ENCODE measurements at regions of chr7 and their contacts with region 1.

Region 1: DNA sequence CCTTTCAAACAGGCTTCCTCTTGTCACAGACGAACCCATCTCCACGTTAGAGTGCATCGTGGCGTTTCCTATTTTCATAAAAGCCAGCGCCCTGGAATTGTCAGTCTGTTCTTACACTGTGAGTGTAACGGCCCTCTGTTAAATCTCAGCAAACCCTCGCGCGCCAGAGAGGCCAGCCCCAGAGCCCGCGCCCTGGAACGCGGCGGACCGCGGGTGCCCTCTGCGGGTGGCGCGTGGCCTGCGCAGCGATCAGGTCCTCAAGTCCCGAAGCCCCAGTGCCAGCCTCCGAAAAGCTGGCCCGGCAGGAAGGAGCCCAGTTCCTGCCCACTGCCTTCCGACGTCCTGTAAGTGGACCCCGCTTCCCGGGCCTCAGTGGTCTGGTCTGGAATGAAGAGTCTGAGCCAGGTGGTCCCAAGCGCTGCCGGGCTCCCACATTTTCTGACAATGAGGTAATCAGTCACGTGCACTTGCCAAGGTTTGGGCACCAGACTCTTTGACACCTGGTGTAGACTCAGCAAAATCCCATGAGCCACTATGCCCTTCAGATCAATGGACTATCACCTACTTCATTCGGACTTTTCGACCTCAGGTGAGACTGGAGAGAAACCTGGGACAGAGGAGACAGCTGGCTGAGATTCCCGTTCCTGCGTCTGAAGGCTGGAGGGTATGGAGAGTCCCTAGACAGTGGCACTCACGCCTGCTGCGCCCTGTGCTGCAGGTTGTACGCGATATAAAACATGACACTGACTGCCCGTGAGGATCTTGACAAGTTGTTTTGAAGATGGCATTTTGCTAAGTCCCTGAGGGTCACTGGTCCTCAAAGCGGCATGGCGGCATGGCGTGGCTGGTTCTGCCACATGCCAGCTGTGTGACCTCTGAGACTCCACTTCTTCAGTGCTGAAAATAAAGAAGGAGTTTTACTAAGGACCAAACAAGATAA is 109.4 kb upstream of the LANCL2 start:
- DNase-seq: peak; percentile 87
- H3K4me3 ChIP-seq: peak overlapping the region; percentile 37 to 66 (median 54)
- H3K27ac ChIP-seq: peak overlapping the region; percentile 33 to 64 (median 40)
- H3K4me1 ChIP-seq: peaks cover 7 to 16% (median 15%) of the 10 kb centered on the region in 4 donors
- H3K27me3 ChIP-seq: peaks cover 35% of the 10 kb centered on the region
- CTCF ChIP-seq: peak; percentile 86 to 88 (median 87)
- EP300 ChIP-seq: no peak
- POLR2A ChIP-seq: no peak

Region 2: GRCh38 chr7:54773472-54774399 is 482.0 kb before region 1 on chr7:
- in situ Hi-C with region 1: loop called in 2 of 4 experiments (anchors 5 kb)
- intact Hi-C with region 1: loop called (anchors 5 kb)
- DNase-seq: peak; percentile 89
- H3K4me3 ChIP-seq: peak overlapping the region; percentile 23 to 52 (median 32)
- H3K27ac ChIP-seq: peak overlapping the region in 2 of 4 donors; percentile 57 to 65
- H3K4me1 ChIP-seq: peaks cover 0 to 6% (median 0%) of the 10 kb centered on the region in 4 donors
- H3K27me3 ChIP-seq: peaks cover 35% of the 10 kb centered on the region
- CTCF ChIP-seq: peak; percentile 76 to 90 (median 82)
- EP300 ChIP-seq: no peak
- POLR2A ChIP-seq: no peak

Region 3: GRCh38 chr7:55192718-55193117 is 63.0 kb before region 1 on chr7:
- in situ Hi-C with region 1: no loop called
- intact Hi-C with region 1: no loop called
- DNase-seq: no peak
- H3K4me3 ChIP-seq: no peak overlapping the region
- H3K27ac ChIP-seq: peak overlapping the region in 1 of 4 donors; percentile 6
- H3K4me1 ChIP-seq: peaks cover 3 to 11% (median 9%) of the 10 kb centered on the region in 4 donors
- H3K27me3 ChIP-seq: no peaks in the 10 kb centered on the region
- CTCF ChIP-seq: no peak
- EP300 ChIP-seq: no peak
- POLR2A ChIP-seq: no peak

Region 4: DNA sequence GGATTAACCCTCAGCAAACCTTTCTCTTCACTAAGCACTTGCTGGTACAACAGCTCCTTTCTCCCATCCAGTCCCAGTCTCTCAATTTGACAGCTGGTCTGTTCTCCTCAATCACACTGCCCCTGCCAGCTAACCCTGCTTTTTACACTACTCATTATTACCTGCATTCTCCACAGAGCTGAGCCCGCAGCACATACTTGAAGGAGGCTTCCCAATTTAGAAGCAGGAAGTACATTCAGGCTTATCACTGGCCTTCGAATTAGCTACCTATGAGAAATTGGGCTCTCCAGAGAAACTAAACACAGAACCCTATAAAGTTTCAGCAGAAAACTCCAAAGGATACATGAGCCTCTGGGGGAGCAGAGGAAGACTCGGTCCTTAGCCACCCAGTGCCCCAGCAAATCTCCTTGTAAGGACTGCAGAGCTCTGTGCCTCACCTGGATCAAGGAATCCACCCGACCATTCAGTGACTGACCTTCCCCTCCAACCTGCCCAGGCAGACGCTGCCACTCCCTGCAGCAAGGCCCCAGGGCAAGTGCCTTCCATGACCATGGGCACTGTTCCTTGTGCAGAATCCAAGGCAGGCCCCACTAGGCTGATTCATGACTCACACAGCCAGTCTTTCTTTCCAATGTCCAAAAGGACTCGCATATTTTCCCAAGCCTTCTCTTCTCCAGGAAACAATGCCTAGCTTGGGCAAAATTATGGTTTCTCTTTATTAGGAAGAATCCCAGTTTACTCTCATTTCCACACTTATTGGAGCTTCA is 248.5 kb after region 1 on chr7:
- in situ Hi-C with region 1: no loop called
- intact Hi-C with region 1: no loop called
- DNase-seq: no peak
- H3K4me3 ChIP-seq: no peak overlapping the region
- H3K27ac ChIP-seq: no peak overlapping the region
- H3K4me1 ChIP-seq: peaks cover 0 to 2% (median 0%) of the 10 kb centered on the region in 4 donors
- H3K27me3 ChIP-seq: no peaks in the 10 kb centered on the region
- CTCF ChIP-seq: no peak
- EP300 ChIP-seq: no peak
- POLR2A ChIP-seq: no peak